ENCODE measurements at regions of chr11 and their contacts with region 1.

Region 1: DNA sequence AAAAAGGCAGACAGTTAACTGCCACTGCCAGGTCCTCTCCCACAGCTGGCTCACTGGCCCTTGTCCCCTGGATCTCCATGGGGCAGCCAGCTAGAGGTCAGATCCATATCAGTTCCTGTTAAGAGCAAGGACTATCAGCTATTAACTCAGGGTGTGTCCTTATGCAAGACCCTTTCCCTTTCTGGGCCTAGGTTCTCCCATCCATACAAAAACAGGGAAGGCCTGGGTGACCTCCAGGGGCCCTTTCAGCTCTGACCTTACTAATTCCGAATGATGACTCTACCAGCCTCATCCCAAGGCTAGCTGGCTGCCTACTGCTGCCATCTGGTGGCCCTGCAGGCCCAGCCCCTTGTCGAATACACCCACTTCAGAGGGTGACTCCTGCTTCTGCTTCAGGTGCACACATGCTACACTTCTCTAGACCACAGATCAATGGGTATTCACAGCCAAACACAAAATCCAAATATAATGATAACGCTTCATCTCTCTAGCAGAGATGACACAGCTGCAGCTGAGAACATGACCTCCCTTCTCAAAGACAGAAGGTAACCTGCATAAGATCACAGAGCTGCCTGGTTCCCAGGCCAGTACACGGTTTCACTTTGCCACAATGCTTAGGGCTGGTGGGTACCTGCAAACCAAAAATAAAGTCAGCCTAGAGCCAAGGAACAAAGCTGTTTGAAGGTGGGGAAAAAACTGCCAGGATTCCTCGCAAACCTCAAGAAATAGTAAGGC is 34.1 kb downstream of the SERGEF start:
- DNase-seq: peak in 1 of 2 donors; percentile 19
- ATAC-seq: no peak
- H3K4me3 ChIP-seq: no peak overlapping the region
- H3K4me3 Mint-ChIP-seq: no peak overlapping the region
- H3K27ac ChIP-seq: no peak overlapping the region
- H3K27ac Mint-ChIP-seq: no peak overlapping the region
- H3K4me1 ChIP-seq: no peaks in the 10 kb centered on the region
- H3K4me1 Mint-ChIP-seq: peaks cover 5 to 6% of the 10 kb centered on the region in 2 donors
- H3K27me3 ChIP-seq: no peaks in the 10 kb centered on the region
- H3K27me3 Mint-ChIP-seq: no peaks in the 10 kb centered on the region
- CTCF ChIP-seq: no peak

Region 2: DNA sequence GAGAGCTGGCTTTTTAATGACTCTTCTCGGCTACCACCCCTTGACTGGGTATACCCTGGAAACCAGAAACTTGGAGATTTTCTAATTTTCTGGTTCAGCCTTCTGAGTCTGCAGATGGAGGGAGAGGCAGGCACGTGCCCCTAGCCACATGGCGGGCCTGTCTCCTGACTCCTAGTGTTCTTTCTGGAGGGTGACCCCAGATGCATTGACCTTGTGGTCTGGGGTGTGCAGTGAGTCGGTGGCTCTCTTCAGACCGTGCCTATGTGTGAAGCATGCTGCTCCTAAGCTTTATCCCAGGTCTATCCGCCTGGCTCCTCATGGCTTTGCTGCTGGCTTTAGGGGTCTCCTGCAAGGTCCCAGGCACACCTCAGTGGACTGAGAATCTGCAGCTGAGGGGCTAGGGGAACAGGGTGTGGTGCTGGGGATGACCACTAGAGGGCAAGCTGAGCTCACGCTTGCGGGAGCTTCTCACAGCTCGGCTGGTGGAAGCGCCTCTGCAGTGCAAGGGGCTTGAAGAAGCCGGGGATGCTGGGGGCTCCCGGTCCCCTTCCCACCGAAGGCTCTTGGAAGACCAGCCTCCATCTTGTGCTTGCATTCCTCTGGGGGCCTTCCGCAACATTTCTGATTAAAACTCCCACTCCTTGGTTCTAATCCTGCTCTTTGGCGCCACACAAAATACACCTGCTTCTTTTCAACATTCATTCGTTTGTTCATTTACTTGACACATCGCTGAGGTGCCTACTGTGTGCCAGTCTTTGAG is 379.8 kb before region 1 on chr11:
- intact Hi-C with region 1: loop called (anchors 2 kb)
- DNase-seq: peak; percentile 50 to 74
- ATAC-seq: peak; percentile 76 to 97 (median 89)
- H3K4me3 ChIP-seq: no peak overlapping the region
- H3K4me3 Mint-ChIP-seq: no peak overlapping the region
- H3K27ac ChIP-seq: no peak overlapping the region
- H3K27ac Mint-ChIP-seq: no peak overlapping the region
- H3K4me1 ChIP-seq: no peaks in the 10 kb centered on the region
- H3K4me1 Mint-ChIP-seq: no peaks in the 10 kb centered on the region
- H3K27me3 ChIP-seq: no peaks in the 10 kb centered on the region
- H3K27me3 Mint-ChIP-seq: peaks cover 0 to 5% of the 10 kb centered on the region in 2 donors
- CTCF ChIP-seq: peak; percentile 83

Region 3: DNA sequence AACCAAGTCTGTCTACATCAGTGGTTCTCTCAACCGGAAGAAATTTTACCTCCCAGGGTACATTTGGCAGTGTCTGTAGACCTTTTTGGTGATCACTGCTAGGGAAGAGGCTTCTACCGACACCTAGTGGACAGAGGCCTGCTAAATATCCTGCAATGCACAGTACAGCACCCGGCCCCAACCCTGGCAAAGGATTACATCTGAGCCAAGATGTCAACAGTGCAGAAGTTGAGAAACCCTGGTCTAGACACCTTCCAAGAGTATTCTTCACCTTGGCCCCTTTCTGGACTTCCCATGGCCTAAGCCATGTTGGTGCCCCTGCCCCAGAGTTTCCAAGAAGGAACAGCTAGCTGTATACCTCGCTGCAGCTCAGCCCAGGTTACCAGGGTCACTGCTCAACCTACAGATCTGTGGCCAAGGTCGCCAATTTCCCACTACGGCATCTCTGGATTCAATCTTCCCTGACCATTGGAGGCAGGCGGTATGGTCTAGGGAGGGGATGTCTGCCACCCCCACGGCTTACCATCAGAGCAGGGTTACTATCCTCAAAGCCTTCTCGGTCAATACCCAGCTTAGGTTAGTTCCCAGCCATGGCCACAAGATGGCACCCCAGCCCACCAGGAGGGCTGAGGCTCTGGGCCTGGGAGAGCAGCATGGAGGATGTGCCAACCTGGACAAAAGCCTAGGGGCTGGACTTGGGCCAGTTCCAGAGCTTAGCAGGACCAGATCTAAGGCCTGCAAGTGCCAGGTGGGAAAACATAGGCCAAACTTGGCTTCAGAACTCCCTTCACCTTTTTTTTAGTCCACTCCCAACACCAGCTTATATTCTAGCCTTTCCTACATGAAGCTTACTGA is 247.9 kb before region 1 on chr11:
- intact Hi-C with region 1: loop called (anchors 1 kb)
- DNase-seq: peak; percentile 45 to 62
- ATAC-seq: peak; percentile 69 to 79 (median 77)
- H3K4me3 ChIP-seq: no peak overlapping the region
- H3K4me3 Mint-ChIP-seq: no peak overlapping the region
- H3K27ac ChIP-seq: no peak overlapping the region
- H3K27ac Mint-ChIP-seq: no peak overlapping the region
- H3K4me1 ChIP-seq: no peaks in the 10 kb centered on the region
- H3K4me1 Mint-ChIP-seq: peaks cover 0 to 5% of the 10 kb centered on the region in 2 donors
- H3K27me3 ChIP-seq: peaks cover 9% of the 10 kb centered on the region
- H3K27me3 Mint-ChIP-seq: peaks cover 48 to 54% of the 10 kb centered on the region in 2 donors
- CTCF ChIP-seq: peak; percentile 62

Region 4: GRCh38 chr11:17921659-17922415 is 56.9 kb before region 1 on chr11:
- intact Hi-C with region 1: no loop called
- DNase-seq: no peak
- ATAC-seq: no peak
- H3K4me3 ChIP-seq: no peak overlapping the region
- H3K4me3 Mint-ChIP-seq: no peak overlapping the region
- H3K27ac ChIP-seq: no peak overlapping the region
- H3K27ac Mint-ChIP-seq: no peak overlapping the region
- H3K4me1 ChIP-seq: no peaks in the 10 kb centered on the region
- H3K4me1 Mint-ChIP-seq: peaks cover 0 to 33% of the 10 kb centered on the region in 2 donors
- H3K27me3 ChIP-seq: no peaks in the 10 kb centered on the region
- H3K27me3 Mint-ChIP-seq: no peaks in the 10 kb centered on the region
- CTCF ChIP-seq: no peak

Region 5: DNA sequence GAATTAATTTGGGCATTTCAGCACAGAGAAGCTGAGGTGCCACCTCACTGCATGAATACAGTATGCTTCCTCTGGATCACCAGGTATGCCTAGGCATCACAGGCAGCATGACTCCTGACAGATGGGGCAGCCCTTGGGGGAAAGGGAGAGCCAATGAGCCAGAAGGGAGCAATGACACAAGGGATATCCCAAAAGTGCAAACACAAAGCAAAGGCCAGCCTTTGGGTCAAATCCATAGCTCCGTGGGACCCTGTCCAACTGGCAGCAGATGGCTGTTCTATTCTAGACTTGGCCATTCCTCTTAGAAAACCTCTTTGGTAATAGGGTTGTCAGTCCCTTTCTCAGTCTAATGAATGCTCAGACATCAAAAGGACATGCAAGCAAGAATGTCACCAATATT is 39.2 kb before region 1 on chr11:
- intact Hi-C with region 1: no loop called
- DNase-seq: no peak
- ATAC-seq: no peak
- H3K4me3 ChIP-seq: no peak overlapping the region
- H3K4me3 Mint-ChIP-seq: no peak overlapping the region
- H3K27ac ChIP-seq: no peak overlapping the region
- H3K27ac Mint-ChIP-seq: no peak overlapping the region
- H3K4me1 ChIP-seq: no peaks in the 10 kb centered on the region
- H3K4me1 Mint-ChIP-seq: peaks cover 0 to 3% of the 10 kb centered on the region in 2 donors
- H3K27me3 ChIP-seq: no peaks in the 10 kb centered on the region
- H3K27me3 Mint-ChIP-seq: no peaks in the 10 kb centered on the region
- CTCF ChIP-seq: no peak

Region 6: GRCh38 chr11:18471995-18472394 is 493.3 kb after region 1 on chr11:
- intact Hi-C with region 1: no loop called
- DNase-seq: no peak
- ATAC-seq: no peak
- H3K4me3 ChIP-seq: no peak overlapping the region
- H3K4me3 Mint-ChIP-seq: no peak overlapping the region
- H3K27ac ChIP-seq: no peak overlapping the region
- H3K27ac Mint-ChIP-seq: no peak overlapping the region
- H3K4me1 ChIP-seq: no peaks in the 10 kb centered on the region
- H3K4me1 Mint-ChIP-seq: no peaks in the 10 kb centered on the region
- H3K27me3 ChIP-seq: no peaks in the 10 kb centered on the region
- H3K27me3 Mint-ChIP-seq: no peaks in the 10 kb centered on the region
- CTCF ChIP-seq: no peak

Measured in natural killer cell (primary cell).